Posterior cingulate gyrus (tissue), 11 donors: ENCODE measurements at regions of chr1 and their contacts with region 1.

Region 1: DNA sequence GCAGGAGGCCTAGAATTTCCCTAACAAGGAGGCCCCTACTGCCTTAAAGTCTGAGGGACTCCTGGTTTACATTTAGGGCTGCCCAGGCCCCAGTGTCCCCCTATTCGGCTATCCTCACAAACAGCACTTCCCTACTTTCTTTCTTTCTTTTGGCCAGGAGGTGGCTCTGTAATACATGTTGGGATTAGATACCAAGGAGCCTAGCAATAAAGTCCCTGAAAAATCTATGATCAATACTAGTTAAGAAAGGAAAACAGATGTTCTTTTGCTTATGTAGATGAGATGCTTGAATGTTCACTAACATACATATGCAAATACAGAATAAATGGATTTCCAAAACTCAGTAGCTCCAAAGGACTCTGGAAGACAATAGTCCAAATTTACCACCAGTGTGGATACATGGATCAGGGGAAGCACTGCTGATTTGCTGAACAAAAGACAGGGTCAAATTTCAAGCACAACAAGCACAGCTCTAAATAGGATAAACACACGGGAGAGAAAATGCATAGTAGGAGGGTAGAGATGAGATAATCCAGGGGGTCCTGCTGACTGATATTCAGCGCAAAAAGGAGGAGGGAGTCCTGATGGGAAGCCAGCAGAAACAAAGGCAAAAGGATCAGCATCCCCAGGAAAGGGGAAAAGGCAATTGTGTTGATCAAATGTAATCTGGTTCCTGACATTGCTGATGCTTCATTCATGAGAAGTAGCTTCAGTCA is 240.0 kb downstream of the NUF2 start:
- DNase-seq: no peak

Region 2: GRCh38 chr1:163544441-163544840 is 17.3 kb before region 1 on chr1:
- intact Hi-C with region 1: loop called (anchors 2 kb)
- DNase-seq: no peak

Region 3: GRCh38 chr1:163585796-163586195 is 24.1 kb after region 1 on chr1:
- intact Hi-C with region 1: no loop called
- DNase-seq: no peak